Sigmoid colon (tissue), 7 donors: ENCODE measurements at regions of chr16 and their contacts with region 1.

Region 1: GRCh38 chr16:57300387-57301125 is 16.1 kb upstream of the PLLP start:
- DNase-seq: peak; percentile 100
- H3K4me3 ChIP-seq: peak overlapping the region; percentile 29 to 51 (median 44)
- H3K27ac ChIP-seq: peak overlapping the region; percentile 83 to 94 (median 90)
- H3K4me1 ChIP-seq: peaks cover 0 to 33% (median 27%) of the 10 kb centered on the region in 4 donors
- H3K27me3 ChIP-seq: no peaks in the 10 kb centered on the region
- CTCF ChIP-seq: peak; percentile 88 to 99 (median 98)
- EP300 ChIP-seq: no peak
- POLR2A ChIP-seq: no peak

Region 2: GRCh38 chr16:57185944-57186871 is 114.3 kb before region 1 on chr16 and contains the starts of genes PSME3IP1 and RSPRY1:
- intact Hi-C with region 1: loop called (anchors 5 kb)
- DNase-seq: peak; percentile 99
- H3K4me3 ChIP-seq: peak within 1 kb of the TSS; percentile 88 to 99 (median 96)
- H3K27ac ChIP-seq: peak within 1 kb of the TSS; percentile 97 to 99 (median 98)
- H3K4me1 ChIP-seq: peaks cover 0 to 57% (median 42%) of the 10 kb centered on the region in 4 donors
- H3K27me3 ChIP-seq: no peaks in the 10 kb centered on the region
- CTCF ChIP-seq: no peak
- EP300 ChIP-seq: no peak
- POLR2A ChIP-seq: peak; percentile 81 to 83
- total RNA-seq, gene PSME3IP1: 60.1 to 81.3 (median 76.9) TPM
- total RNA-seq, gene RSPRY1: 30.6 to 42.7 (median 34.1) TPM

Region 3: GRCh38 chr16:57372372-57373116 is 72.0 kb after region 1 on chr16 and contains the start of gene CX3CL1:
- intact Hi-C with region 1: loop called (anchors 5 kb)
- DNase-seq: peak; percentile 87
- H3K4me3 ChIP-seq: peak within 1 kb of the TSS; percentile 44 to 65 (median 60)
- H3K27ac ChIP-seq: peak within 1 kb of the TSS; percentile 82 to 95 (median 88)
- H3K4me1 ChIP-seq: peaks cover 0 to 27% (median 23%) of the 10 kb centered on the region in 4 donors
- H3K27me3 ChIP-seq: peaks cover 0 to 4% (median 0%) of the 10 kb centered on the region in 3 donors
- CTCF ChIP-seq: no peak
- EP300 ChIP-seq: no peak
- POLR2A ChIP-seq: peak; percentile 51 to 57
- total RNA-seq, gene CX3CL1: 3.5 to 18.6 (median 6.7) TPM

Region 4: GRCh38 chr16:57519796-57520360 is 219.3 kb after region 1 on chr16:
- intact Hi-C with region 1: loop called (anchors 5 kb)
- DNase-seq: peak; percentile 88
- H3K4me3 ChIP-seq: no peak overlapping the region
- H3K27ac ChIP-seq: no peak overlapping the region
- H3K4me1 ChIP-seq: peaks cover 0 to 3% (median 0%) of the 10 kb centered on the region in 4 donors
- H3K27me3 ChIP-seq: no peaks in the 10 kb centered on the region
- CTCF ChIP-seq: peak; percentile 77 to 96 (median 86)
- EP300 ChIP-seq: no peak
- POLR2A ChIP-seq: no peak

Region 5: DNA sequence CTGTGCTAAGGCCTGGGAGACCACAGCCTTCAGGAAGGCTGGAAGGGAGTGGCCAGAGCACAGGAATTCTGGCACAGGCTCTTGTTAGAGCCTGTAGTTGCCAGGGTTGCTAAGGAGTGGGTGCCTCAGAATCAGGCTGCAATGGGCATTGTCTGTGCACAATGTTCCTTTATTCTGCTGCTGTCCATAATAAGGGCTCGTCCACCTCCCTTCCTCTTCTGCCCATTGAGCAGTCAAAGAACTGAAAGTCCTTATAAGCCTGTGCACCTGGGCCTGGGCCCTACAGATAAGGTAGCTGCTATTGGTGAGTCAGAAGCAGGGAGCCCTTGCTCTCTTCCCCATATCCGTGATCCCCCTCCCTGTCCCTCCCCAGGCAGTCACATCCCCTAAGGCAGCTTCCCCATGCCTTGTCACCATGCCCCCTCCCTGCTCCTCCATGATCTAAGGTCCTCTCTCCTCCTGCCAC is 675.8 kb after region 1 on chr16:
- intact Hi-C with region 1: no loop called
- DNase-seq: no peak
- H3K4me3 ChIP-seq: no peak overlapping the region
- H3K27ac ChIP-seq: peak overlapping the region in 1 of 4 donors; percentile 46
- H3K4me1 ChIP-seq: peaks cover 0 to 7% (median 0%) of the 10 kb centered on the region in 4 donors
- H3K27me3 ChIP-seq: no peaks in the 10 kb centered on the region
- CTCF ChIP-seq: no peak
- EP300 ChIP-seq: no peak
- POLR2A ChIP-seq: no peak